CD8-positive, alpha-beta memory T cell (primary cell): ENCODE measurements at regions of chr11 and their contacts with region 1.

Region 1: GRCh38 chr11:304915-305843 is 2.4 kb upstream of the IFITM2 start:
- DNase-seq: peak in 3 of 5 donors; percentile 60 to 80 (median 64)
- H3K4me3 ChIP-seq: no peak overlapping the region
- H3K4me3 Mint-ChIP-seq: peak overlapping the region in 4 of 7 donors; percentile 1 to 78 (median 53)
- H3K27ac ChIP-seq: no peak overlapping the region
- H3K27ac Mint-ChIP-seq: peak overlapping the region in 7 of 8 donors; percentile 18 to 92 (median 66)
- H3K4me1 ChIP-seq: peaks cover 40% of the 10 kb centered on the region
- H3K4me1 Mint-ChIP-seq: peaks cover 41 to 58% (median 49%) of the 10 kb centered on the region in 3 donors
- H3K27me3 ChIP-seq: no peaks in the 10 kb centered on the region
- H3K27me3 Mint-ChIP-seq: peaks cover 0 to 5% of the 10 kb centered on the region in 2 donors

Region 2: DNA sequence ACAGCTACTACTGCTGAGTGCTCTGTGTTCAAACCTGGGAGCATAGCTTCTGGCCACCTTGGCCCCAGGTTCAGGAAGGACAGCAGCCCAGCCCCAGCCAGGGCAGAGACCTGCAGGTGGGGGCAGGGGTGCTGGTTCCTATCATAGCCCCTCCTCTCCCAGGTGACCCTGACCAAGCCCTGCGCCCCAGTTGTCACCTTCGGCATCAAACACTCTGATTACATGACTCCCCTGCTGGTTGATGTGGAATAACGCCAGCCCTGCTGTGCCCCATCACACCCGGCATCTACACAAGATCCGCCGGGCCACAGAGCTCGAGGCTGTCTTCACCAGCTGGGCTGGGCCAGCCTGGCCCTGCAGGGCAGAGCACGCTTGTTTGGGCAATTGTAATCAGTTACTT is 105.4 kb before region 1 on chr11:
- CTCF ChIA-PET with region 1: no interaction called
- POLR2A ChIA-PET with region 1: no interaction called
- DNase-seq: peak in 1 of 5 donors; percentile 38
- H3K4me3 ChIP-seq: no peak overlapping the region
- H3K4me3 Mint-ChIP-seq: no peak overlapping the region
- H3K27ac ChIP-seq: no peak overlapping the region
- H3K27ac Mint-ChIP-seq: peak overlapping the region in 1 of 8 donors; percentile 58
- H3K4me1 ChIP-seq: peaks cover 32% of the 10 kb centered on the region
- H3K4me1 Mint-ChIP-seq: peaks cover 28 to 35% (median 31%) of the 10 kb centered on the region in 3 donors
- H3K27me3 ChIP-seq: no peaks in the 10 kb centered on the region
- H3K27me3 Mint-ChIP-seq: no peaks in the 10 kb centered on the region

Region 3: GRCh38 chr11:279966-280582 is 25.1 kb before region 1 on chr11:
- CTCF ChIA-PET with region 1: interaction called, 18 read pairs
- POLR2A ChIA-PET with region 1: interaction called, 3 read pairs
- DNase-seq: peak in 2 of 5 donors; percentile 47 to 71
- H3K4me3 ChIP-seq: peak overlapping the region; percentile 50
- H3K4me3 Mint-ChIP-seq: peak overlapping the region; percentile 77 to 91 (median 84)
- H3K27ac ChIP-seq: no peak overlapping the region
- H3K27ac Mint-ChIP-seq: peak overlapping the region in 5 of 8 donors; percentile 19 to 85 (median 54)
- H3K4me1 ChIP-seq: peaks cover 47% of the 10 kb centered on the region
- H3K4me1 Mint-ChIP-seq: peaks cover 42 to 58% (median 50%) of the 10 kb centered on the region in 3 donors
- H3K27me3 ChIP-seq: no peaks in the 10 kb centered on the region
- H3K27me3 Mint-ChIP-seq: no peaks in the 10 kb centered on the region

Region 4: GRCh38 chr11:288328-289144 is 16.6 kb before region 1 on chr11 and contains the start of gene PGGHG:
- CTCF ChIA-PET with region 1: interaction called, 24 read pairs
- POLR2A ChIA-PET with region 1: interaction called, 4 read pairs
- DNase-seq: peak; percentile 55 to 71 (median 67)
- H3K4me3 ChIP-seq: peak within 1 kb of the TSS; percentile 74
- H3K4me3 Mint-ChIP-seq: peak within 1 kb of the TSS; percentile 94 to 99 (median 98)
- H3K27ac ChIP-seq: peak within 1 kb of the TSS; percentile 79
- H3K27ac Mint-ChIP-seq: peak within 1 kb of the TSS; percentile 93 to 99 (median 97)
- H3K4me1 ChIP-seq: peaks cover 27% of the 10 kb centered on the region
- H3K4me1 Mint-ChIP-seq: peaks cover 29 to 59% (median 35%) of the 10 kb centered on the region in 3 donors
- H3K27me3 ChIP-seq: no peaks in the 10 kb centered on the region
- H3K27me3 Mint-ChIP-seq: peaks cover 0 to 9% of the 10 kb centered on the region in 2 donors
- total RNA-seq, gene PGGHG: 81.0 to 81.2 TPM

Region 5: DNA sequence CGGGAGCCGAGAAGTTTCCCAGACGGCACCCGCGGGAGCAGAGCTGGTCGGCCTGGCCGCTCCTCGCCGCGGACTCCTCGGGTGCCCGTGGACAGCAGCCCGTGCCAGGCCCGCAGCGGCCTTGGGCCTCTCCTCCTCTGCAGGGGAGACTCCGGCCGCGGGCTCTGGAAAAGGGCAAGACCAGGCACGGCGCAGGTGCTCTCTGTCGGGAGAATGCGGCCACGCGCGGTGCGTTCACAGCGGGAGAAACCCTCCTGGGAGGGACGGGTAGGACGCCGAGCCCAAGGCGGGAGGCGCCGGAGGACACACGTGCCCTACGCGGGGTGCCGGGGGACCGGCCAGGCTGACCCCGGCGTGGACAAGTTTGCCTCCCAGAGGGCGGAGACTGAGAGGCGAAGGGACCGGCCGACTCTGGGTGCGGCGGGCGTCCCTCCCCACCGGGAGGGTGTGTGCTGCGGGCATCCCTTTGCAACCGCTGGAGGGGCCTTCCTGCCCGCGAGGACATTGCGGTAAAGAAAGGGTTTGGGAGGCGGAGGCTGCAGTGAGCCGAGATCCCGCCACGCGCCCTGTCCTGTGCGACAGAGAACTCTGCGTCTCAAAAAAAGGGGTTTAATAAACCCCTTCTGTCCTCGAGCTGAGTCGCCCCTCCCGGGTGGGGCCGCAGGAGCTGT is 11.0 kb after region 1 on chr11:
- CTCF ChIA-PET with region 1: interaction called, 34 read pairs
- POLR2A ChIA-PET with region 1: interaction called, 7 read pairs
- DNase-seq: peak in 2 of 5 donors; percentile 35 to 54
- H3K4me3 ChIP-seq: peak overlapping the region; percentile 98
- H3K4me3 Mint-ChIP-seq: peak overlapping the region; percentile 85 to 99 (median 91)
- H3K27ac ChIP-seq: peak overlapping the region; percentile 88
- H3K27ac Mint-ChIP-seq: peak overlapping the region; percentile 90 to 100 (median 98)
- H3K4me1 ChIP-seq: peaks cover 37% of the 10 kb centered on the region
- H3K4me1 Mint-ChIP-seq: peaks cover 49 to 65% (median 58%) of the 10 kb centered on the region in 3 donors
- H3K27me3 ChIP-seq: no peaks in the 10 kb centered on the region
- H3K27me3 Mint-ChIP-seq: peaks cover 0 to 6% of the 10 kb centered on the region in 2 donors

Region 6: DNA sequence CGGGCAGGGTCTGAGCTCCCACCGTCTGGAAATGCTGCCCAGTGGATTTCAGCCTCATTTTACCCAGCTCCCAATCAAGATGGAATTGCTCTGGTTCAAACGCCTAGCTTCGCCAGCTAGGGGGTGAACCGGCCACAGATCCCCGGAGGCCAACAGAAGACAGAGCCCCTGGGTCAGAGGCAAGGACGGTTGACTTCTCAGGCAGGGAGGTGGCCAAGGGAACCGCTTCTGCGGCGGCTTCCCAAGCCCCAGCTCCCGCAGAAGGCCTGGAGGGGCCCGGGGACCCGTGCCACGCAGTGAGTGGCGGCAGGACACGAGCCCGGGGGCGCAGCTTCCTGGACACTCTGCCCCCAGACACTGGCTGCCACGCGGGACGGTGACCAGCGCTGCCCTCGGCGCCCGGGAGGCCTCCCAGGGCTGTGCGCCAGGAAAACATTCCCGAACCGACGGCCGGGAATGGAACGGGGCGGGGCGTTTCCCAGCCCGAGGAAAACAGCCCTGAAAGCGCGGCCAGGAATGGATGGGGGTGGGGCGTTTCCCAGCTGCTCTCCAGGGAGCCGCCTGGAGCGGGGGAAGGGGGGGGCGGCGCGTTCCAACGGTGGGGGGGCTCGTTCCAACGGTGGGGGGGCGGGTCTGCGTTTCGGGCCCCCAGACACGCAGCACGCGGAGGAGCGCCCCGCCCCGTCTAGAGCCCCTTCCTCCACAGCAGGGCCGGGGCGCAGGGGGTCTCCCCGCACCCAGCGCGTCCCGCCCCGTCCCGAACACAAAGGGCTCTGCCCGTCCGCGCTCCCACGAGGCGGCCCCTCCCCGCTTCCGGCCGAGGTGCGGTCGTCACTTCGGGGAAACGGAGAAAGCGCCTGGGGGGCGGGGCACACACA is 50.6 kb after region 1 on chr11:
- CTCF ChIA-PET with region 1: interaction called, 21 read pairs
- POLR2A ChIA-PET with region 1: interaction called, 3 read pairs
- DNase-seq: peak; percentile 75 to 90 (median 84)
- H3K4me3 ChIP-seq: peak overlapping the region; percentile 84
- H3K4me3 Mint-ChIP-seq: peak overlapping the region; percentile 63 to 85 (median 81)
- H3K27ac ChIP-seq: peak overlapping the region; percentile 82
- H3K27ac Mint-ChIP-seq: peak overlapping the region; percentile 78 to 99 (median 94)
- H3K4me1 ChIP-seq: peaks cover 25% of the 10 kb centered on the region
- H3K4me1 Mint-ChIP-seq: peaks cover 47 to 49% (median 48%) of the 10 kb centered on the region in 3 donors
- H3K27me3 ChIP-seq: no peaks in the 10 kb centered on the region
- H3K27me3 Mint-ChIP-seq: no peaks in the 10 kb centered on the region

Region 7: GRCh38 chr11:363948-364761 is 59.0 kb after region 1 on chr11:
- CTCF ChIA-PET with region 1: interaction called, 32 read pairs
- POLR2A ChIA-PET with region 1: interaction called, 6 read pairs
- DNase-seq: peak; percentile 58 to 81 (median 65)
- H3K4me3 ChIP-seq: peak overlapping the region; percentile 20
- H3K4me3 Mint-ChIP-seq: peak overlapping the region in 6 of 7 donors; percentile 17 to 74 (median 40)
- H3K27ac ChIP-seq: no peak overlapping the region
- H3K27ac Mint-ChIP-seq: peak overlapping the region in 6 of 8 donors; percentile 58 to 79 (median 68)
- H3K4me1 ChIP-seq: peaks cover 28% of the 10 kb centered on the region
- H3K4me1 Mint-ChIP-seq: peaks cover 19 to 27% (median 21%) of the 10 kb centered on the region in 3 donors
- H3K27me3 ChIP-seq: peaks cover 24% of the 10 kb centered on the region
- H3K27me3 Mint-ChIP-seq: peaks cover 23 to 31% of the 10 kb centered on the region in 2 donors

Region 8: DNA sequence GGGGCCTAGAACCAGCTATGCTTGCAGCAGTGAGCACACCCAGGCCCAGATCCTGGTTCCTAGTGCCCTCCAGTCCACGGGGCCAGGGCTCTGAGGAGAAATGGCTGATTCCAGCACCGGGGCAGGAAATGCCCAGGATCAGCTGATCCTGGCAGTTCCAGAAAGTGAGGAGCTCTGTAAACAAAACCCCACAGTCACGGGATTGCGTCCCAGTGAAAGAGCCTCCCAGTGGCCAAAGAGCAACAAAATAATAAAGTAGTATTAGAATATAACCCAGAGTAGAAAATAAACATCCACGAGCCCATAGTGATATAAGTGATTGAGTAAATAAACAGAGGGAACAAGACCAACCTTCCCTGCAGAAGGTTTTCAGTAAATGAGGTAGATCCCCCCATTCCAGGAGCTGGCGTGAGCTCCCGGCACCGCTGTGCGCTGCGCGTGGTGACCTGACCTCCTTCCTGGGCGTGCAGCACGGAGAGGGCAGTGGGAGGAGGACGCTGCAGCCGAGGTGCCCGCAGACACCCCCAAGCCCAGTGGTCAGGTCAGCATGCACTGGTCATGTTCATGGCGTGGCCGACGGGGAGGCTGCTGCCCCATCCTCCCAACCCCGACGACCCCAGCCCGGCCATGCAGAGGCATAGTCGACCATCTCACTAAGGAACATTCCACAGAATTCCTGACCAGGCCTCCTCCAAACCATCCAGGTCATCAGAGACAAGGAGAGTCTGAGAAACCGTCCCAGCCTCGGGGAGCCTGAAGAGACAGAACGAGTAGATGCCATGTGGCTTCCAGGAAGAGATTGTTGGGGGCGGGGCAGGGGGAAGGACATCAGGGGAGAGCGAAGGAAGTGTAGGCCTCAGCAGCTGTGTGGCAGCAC is 164.7 kb after region 1 on chr11:
- CTCF ChIA-PET with region 1: no interaction called
- POLR2A ChIA-PET with region 1: no interaction called
- DNase-seq: no peak
- H3K4me3 ChIP-seq: no peak overlapping the region
- H3K4me3 Mint-ChIP-seq: no peak overlapping the region
- H3K27ac ChIP-seq: no peak overlapping the region
- H3K27ac Mint-ChIP-seq: no peak overlapping the region
- H3K4me1 ChIP-seq: no peaks in the 10 kb centered on the region
- H3K4me1 Mint-ChIP-seq: no peaks in the 10 kb centered on the region
- H3K27me3 ChIP-seq: no peaks in the 10 kb centered on the region
- H3K27me3 Mint-ChIP-seq: no peaks in the 10 kb centered on the region